A673 (cell line): ENCODE measurements at regions of chr4 and their contacts with region 1.

Region 1: GRCh38 chr4:102449751-102450352 is 51.3 kb upstream of the NFKB1 start:
- DNase-seq: peak; percentile 78
- H3K4me3 ChIP-seq: no peak overlapping the region
- H3K27ac ChIP-seq: no peak overlapping the region
- H3K4me1 ChIP-seq: no peaks in the 10 kb centered on the region
- H3K27me3 ChIP-seq: no peaks in the 10 kb centered on the region
- CTCF ChIP-seq: peak; percentile 74

Region 2: GRCh38 chr4:102612824-102613366 is 163.0 kb after region 1 on chr4:
- CTCF ChIA-PET with region 1: no interaction called
- POLR2A ChIA-PET with region 1: no interaction called
- intact Hi-C with region 1: loop called (anchors 2 kb)
- DNase-seq: no peak
- H3K4me3 ChIP-seq: no peak overlapping the region
- H3K27ac ChIP-seq: no peak overlapping the region
- H3K4me1 ChIP-seq: no peaks in the 10 kb centered on the region
- H3K27me3 ChIP-seq: no peaks in the 10 kb centered on the region
- CTCF ChIP-seq: no peak

Region 3: DNA sequence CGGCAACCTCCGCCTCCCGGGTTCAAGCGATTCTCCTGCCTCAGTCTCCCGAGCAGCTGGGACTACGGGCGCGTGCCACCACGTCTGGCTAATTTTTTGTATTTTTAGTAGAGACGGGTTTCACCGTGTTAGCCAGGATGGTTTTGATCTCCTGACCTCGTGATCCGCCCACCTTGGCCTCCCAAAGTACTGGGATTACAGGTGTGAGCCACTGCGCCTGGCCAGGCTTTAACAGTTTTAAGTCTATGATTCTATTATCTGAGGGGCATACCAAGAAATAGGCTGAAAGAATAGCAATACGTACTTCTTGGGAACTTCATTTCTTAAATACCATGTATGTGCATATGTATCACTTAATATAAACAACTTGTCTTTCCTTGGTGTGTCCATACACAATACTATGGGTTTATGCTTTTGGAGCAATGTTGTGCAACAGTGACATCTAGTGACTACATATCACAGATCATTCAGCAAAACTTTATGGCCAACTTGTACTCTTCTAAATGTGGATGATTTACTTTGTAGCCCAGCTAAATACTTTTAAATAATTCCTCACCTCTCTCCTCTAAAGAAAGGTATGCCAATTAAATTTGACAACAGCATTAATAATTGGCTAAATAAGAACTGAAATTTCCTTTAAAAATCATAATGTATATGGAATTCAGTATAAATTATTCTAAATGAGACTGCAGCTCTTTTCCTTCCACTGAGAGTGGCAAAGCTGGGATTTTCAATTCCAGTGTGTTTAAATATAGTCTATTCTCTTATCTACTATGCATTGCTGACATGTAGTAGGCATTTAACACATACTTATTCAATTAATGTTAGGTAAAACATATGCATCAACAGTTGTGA is 559.2 kb after region 1 on chr4:
- CTCF ChIA-PET with region 1: no interaction called
- POLR2A ChIA-PET with region 1: no interaction called
- intact Hi-C with region 1: loop called (anchors 5 kb)
- DNase-seq: peak; percentile 74
- H3K4me3 ChIP-seq: no peak overlapping the region
- H3K27ac ChIP-seq: no peak overlapping the region
- H3K4me1 ChIP-seq: no peaks in the 10 kb centered on the region
- H3K27me3 ChIP-seq: peaks cover 2% of the 10 kb centered on the region
- CTCF ChIP-seq: peak; percentile 70

Region 4: GRCh38 chr4:103091601-103092223 is 641.9 kb after region 1 on chr4:
- CTCF ChIA-PET with region 1: no interaction called
- POLR2A ChIA-PET with region 1: no interaction called
- intact Hi-C with region 1: loop called (anchors 5 kb)
- DNase-seq: peak; percentile 79
- H3K4me3 ChIP-seq: no peak overlapping the region
- H3K27ac ChIP-seq: no peak overlapping the region
- H3K4me1 ChIP-seq: no peaks in the 10 kb centered on the region
- H3K27me3 ChIP-seq: no peaks in the 10 kb centered on the region
- CTCF ChIP-seq: peak; percentile 73